WTC11 (cell line): ENCODE measurements at regions of chr15 and their contacts with region 1.

Region 1: GRCh38 chr15:73388256-73388781 is 19.6 kb upstream of the HCN4 start:
- DNase-seq: peak; percentile 26
- ATAC-seq: peak; percentile 46
- H3K4me3 Mint-ChIP-seq: no peak overlapping the region
- H3K27ac Mint-ChIP-seq: peak overlapping the region; percentile 88
- H3K4me1 Mint-ChIP-seq: peaks cover 53% of the 10 kb centered on the region
- H3K27me3 Mint-ChIP-seq: peaks cover 12% of the 10 kb centered on the region
- CTCF ChIP-seq: no peak

Region 2: DNA sequence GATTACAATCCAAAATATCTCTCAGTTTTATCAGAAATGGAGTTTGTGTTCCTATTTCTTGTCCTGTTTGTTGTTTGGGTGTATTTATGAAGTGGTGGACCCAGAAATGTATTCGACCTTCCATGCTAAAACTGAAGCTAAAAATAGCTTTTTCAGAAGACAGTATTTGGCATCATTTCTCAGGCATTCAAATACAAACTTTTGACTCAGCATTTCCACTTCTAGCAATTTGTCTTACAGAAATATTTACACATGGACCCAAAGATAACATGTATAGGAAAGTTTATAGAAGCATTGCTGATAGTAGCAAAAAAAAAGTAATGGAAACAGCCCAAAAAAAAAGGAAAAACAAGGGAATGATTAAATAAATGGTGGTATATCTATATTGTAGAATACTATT is 175.9 kb before region 1 on chr15:
- CTCF ChIA-PET with region 1: no interaction called
- POLR2A ChIA-PET with region 1: no interaction called
- DNase-seq: no peak
- ATAC-seq: no peak
- H3K4me3 Mint-ChIP-seq: no peak overlapping the region
- H3K27ac Mint-ChIP-seq: no peak overlapping the region
- H3K4me1 Mint-ChIP-seq: no peaks in the 10 kb centered on the region
- H3K27me3 Mint-ChIP-seq: no peaks in the 10 kb centered on the region
- CTCF ChIP-seq: no peak

Region 3: DNA sequence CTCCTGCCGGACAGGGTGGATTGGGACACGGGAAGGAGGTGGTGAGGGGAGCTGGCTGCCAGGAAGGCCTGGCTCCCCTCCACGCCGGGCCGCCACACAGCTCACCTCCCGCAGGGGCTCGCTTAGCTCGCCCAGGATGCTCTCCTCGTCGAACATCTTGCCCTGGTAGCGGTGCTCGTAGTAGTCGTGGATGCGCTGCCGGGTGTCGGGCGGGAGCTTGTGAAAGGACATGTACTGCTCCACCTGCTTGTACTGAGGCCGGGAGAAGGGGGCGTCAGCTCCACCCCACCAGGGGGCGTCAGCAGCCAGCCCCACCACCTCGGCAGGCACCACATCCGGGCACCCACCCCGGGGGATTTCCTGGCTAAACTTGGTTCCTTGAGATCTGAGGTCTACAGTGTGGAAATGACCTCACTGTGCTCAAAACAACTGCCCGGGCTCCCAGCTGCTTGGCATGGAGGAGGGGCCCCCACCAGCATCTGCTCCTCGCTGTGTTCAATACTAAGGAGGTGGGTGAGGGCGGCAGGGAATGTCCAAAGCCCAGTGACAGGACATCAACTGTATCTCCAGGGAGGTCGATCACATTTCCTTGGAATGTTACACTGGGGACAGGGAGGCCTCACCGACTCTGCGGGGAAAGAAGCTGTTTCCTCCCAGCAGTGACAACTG is 63.0 kb before region 1 on chr15:
- CTCF ChIA-PET with region 1: interaction called, 10 read pairs
- POLR2A ChIA-PET with region 1: no interaction called
- DNase-seq: peak; percentile 41
- ATAC-seq: peak; percentile 53
- H3K4me3 Mint-ChIP-seq: no peak overlapping the region
- H3K27ac Mint-ChIP-seq: 0 out of 2 replicates have a peak overlapping the region, but pooled peaks have one; percentile 70
- H3K4me1 Mint-ChIP-seq: 0 out of 2 replicates have a peak, but pooled peaks cover 3% of the 10 kb centered on the region
- H3K27me3 Mint-ChIP-seq: no peaks in the 10 kb centered on the region
- CTCF ChIP-seq: 0 out of 2 replicates have a peak, but pooled peaks have one; percentile 26

Region 4: DNA sequence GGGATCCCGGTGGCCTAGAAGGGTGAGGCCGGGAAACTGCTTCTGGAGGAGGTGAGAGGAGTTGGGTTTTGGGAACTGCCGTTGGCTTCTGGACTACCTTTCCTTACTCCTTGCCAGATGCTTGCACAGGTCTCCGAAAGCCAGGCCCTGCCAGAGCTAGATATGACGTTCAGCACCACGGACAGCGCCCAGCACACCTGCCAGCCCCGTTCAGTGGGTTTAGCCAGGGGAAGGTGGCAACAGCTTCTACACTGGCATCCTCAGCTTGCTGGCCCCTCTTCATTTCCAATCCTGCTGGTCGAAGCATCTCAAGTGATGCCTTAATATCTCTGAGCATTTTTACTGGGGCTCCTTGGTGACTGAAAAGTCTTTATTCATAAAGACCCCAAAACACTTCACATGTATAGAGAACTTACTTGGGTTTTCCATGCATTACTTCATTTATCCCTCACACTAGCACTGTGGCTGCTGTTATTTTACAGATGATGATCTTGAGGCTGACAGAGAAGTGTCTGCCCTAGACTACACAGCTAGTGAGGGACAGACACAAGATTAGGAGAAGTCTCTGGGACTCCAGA is 41.5 kb before region 1 on chr15:
- CTCF ChIA-PET with region 1: no interaction called
- POLR2A ChIA-PET with region 1: no interaction called
- DNase-seq: peak; percentile 87
- ATAC-seq: peak; percentile 92
- H3K4me3 Mint-ChIP-seq: no peak overlapping the region
- H3K27ac Mint-ChIP-seq: no peak overlapping the region
- H3K4me1 Mint-ChIP-seq: peaks cover 14% of the 10 kb centered on the region
- H3K27me3 Mint-ChIP-seq: no peaks in the 10 kb centered on the region
- CTCF ChIP-seq: no peak